Heart left ventricle (tissue), 16 donors: ENCODE measurements at regions of chr10 and their contacts with region 1.

Region 1: GRCh38 chr10:4081685-4082111 is 296.7 kb upstream of the KLF6 start:
- DNase-seq: peak in 3 of 5 donors; percentile 43 to 55 (median 47)
- ATAC-seq: peak in 3 of 4 donors; percentile 28 to 57 (median 57)
- H3K4me3 ChIP-seq: no peak overlapping the region
- H3K27ac ChIP-seq: peak overlapping the region in 10 of 12 donors; percentile 40 to 59 (median 52)
- H3K4me1 ChIP-seq: peaks cover 0 to 55% (median 32%) of the 10 kb centered on the region in 12 donors
- H3K27me3 ChIP-seq: no peaks in the 10 kb centered on the region
- CTCF ChIP-seq: no peak
- POLR2A ChIP-seq: no peak

Region 2: DNA sequence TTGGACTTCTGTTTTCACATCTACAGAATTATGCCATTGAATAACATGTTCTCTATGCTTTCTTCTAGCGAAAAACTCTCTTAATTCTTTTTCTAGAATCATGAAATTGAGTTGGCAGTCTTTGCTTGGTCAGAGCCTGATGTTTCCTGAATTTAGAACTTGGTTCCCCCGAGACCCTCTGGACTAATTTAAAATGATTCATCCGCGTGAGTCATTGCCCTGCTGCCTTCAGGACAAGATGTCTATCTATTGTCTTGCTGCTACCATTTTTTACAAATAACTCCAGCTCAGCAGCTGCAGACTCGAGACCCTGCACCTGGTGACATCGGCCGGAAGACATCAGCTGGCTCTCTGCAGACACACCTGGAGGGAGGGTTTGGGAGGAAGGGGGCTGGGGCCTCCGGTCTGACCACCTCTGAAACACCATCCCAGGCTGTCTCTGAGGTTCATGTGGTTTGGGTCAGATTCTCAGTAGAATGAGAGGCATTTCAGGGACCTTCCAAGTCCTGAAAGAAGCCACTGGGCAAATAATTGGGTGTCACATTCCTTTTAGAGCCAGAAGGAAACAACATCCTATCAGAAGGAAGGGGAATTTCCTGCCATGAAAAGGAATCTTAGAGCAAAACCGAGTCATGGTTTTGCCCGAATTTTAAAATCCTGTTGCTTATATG is 275.8 kb before region 1 on chr10:
- intact Hi-C with region 1: loop called in 2 of 10 experiments (anchors 5 to 10 kb)
- DNase-seq: peak in 4 of 5 donors; percentile 53 to 76 (median 59)
- ATAC-seq: peak in 3 of 4 donors; percentile 8 to 47 (median 43)
- H3K4me3 ChIP-seq: peak overlapping the region in 6 of 12 donors; percentile 4 to 31 (median 9)
- H3K27ac ChIP-seq: peak overlapping the region; percentile 66 to 96 (median 84)
- H3K4me1 ChIP-seq: peaks cover 0 to 94% (median 76%) of the 10 kb centered on the region in 12 donors
- H3K27me3 ChIP-seq: no peaks in the 10 kb centered on the region
- CTCF ChIP-seq: no peak
- POLR2A ChIP-seq: no peak

Region 3: GRCh38 chr10:3877211-3878000 is 204.3 kb before region 1 on chr10:
- intact Hi-C with region 1: no loop called
- DNase-seq: no peak
- ATAC-seq: peak in 1 of 4 donors; percentile 33
- H3K4me3 ChIP-seq: peak overlapping the region in 1 of 12 donors; percentile 5
- H3K27ac ChIP-seq: peak overlapping the region in 2 of 12 donors; percentile 8 to 83
- H3K4me1 ChIP-seq: peaks cover 0 to 54% (median 5%) of the 10 kb centered on the region in 12 donors
- H3K27me3 ChIP-seq: no peaks in the 10 kb centered on the region
- CTCF ChIP-seq: peak in 1 of 12 donors; percentile 6
- POLR2A ChIP-seq: no peak

Region 4: DNA sequence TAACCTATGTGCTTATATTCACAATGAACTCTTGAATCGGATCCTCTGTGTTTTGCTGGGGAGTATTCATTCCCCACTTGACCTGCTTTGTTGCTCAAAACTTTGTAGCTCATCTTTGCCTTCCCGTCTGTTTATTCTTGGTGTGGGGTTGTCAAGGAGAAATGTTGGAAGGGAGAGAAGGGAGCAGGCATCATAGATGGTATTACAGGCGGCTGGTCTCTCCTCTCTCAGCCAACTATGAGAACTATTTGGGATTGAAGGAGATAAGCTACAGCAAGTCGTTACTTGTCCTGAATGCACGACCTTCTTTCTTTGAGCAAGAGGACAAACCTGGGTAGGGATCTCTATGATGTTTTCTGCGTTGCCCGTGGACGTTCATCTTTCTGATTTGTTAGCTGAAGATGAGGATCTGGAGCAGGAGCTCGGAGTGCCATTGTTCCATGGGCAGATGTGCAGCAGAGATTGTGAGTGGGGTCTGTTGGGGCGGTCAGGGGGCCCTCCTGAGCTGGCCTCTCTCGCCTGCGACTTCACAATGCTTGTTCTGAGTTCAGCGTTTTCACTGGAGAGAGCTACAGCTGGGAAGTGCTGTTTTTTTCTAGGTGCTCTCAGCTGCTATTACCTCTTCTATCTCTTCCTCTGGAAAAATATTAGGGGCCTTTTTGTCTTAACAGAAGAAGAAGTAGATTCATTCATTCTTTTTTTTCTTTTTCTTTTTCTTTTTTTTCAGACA is 169.8 kb before region 1 on chr10:
- intact Hi-C with region 1: loop called in 2 of 10 experiments (anchors 10 kb)
- DNase-seq: no peak
- ATAC-seq: peak; percentile 87 to 90 (median 89)
- H3K4me3 ChIP-seq: peak overlapping the region in 11 of 12 donors; percentile 6 to 56 (median 48)
- H3K27ac ChIP-seq: peak overlapping the region; percentile 53 to 91 (median 82)
- H3K4me1 ChIP-seq: peaks cover 0 to 36% (median 0%) of the 10 kb centered on the region in 12 donors
- H3K27me3 ChIP-seq: no peaks in the 10 kb centered on the region
- CTCF ChIP-seq: no peak
- POLR2A ChIP-seq: peak in 1 of 2 donors; percentile 30